ENCODE measurements at regions of chr19 and their contacts with region 1.

Region 1: GRCh38 chr19:4909897-4910593 is 744 bp downstream of the UHRF1 start:
- DNase-seq: peak; percentile 99
- H3K4me3 ChIP-seq: peak overlapping the region; percentile 62 to 82
- H3K27ac ChIP-seq: peak overlapping the region; percentile 81 to 84
- H3K4me1 ChIP-seq: peaks cover 27 to 31% of the 10 kb centered on the region in 2 experiments; a peak in 3 of 4 replicates
- H3K27me3 ChIP-seq: no peaks in the 10 kb centered on the region
- CTCF ChIP-seq: no peak
- EP300 ChIP-seq: no peak
- RAD21 ChIP-seq: no peak

Region 2: DNA sequence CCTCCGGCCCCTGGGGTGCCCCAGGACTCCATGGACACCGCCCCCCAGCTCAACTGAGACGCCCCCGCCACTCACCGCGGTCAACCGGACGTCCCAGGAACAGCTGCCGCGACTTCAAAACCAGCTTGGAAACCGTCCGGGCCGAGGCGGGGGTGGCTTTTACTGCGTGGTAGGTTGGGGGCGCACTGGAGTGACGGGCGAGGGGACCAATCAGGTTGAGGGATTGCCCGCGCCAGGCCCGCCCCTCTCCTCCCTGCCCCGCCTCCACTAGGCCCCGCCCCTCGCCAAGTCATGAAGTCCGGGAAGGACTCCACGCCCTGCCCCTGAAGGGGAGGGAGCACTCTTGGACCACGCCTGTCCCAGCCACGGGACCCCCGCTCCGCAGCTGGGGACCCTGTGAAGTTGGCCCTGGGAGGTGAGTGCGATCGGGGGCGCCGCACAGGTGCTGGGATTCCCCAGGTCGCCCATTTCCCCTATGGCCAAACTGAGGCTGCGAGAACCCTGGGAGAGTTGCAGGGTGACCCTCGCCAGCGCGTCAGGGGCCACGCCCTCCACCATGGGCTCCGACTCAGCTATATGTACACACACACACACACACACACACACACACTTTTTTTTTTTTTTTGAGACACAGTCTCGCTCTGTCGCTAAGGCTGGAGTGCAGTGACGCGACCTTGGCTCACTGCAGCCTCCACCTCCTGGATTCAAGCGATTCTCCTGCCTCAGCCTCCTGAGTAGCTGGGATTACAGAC is 42.3 kb before region 1 on chr19 and contains the start of gene PLIN3:
- CTCF ChIA-PET with region 1: interaction called, 121 read pairs
- POLR2A ChIA-PET with region 1: interaction called, 3 read pairs
- DNase-seq: peak; percentile 100
- H3K4me3 ChIP-seq: peak within 1 kb of the TSS; percentile 60 to 97
- H3K27ac ChIP-seq: peak within 1 kb of the TSS; percentile 55 to 84; a peak in 3 of 4 replicates
- H3K4me1 ChIP-seq: peaks cover 6 to 7% of the 10 kb centered on the region in 2 experiments; a peak in 1 of 4 replicates
- H3K27me3 ChIP-seq: no peaks in the 10 kb centered on the region
- CTCF ChIP-seq: no peak
- EP300 ChIP-seq: no peak
- RAD21 ChIP-seq: no peak
- polyA plus RNA-seq, gene PLIN3: 129 and 136 TPM in 2 replicates

Region 3: DNA sequence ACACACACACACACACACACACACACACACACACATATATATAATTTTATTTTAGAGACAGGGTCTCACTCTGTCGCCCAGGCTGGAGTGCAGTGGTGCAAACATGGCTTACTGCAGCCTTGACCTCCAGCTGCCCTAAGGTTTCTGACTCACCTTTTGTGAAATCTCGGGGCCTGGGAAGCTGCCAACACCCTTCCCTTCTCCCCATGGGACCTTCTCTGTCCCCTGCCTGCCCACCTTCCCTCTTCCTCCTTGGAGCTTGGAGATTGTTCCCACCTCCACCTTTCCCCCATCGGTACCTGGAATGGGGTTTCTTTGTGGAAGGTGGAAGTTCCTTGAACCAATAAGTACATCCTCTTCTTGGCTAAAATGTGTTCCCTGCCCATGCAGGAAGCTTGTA is 13.7 kb before region 1 on chr19:
- CTCF ChIA-PET with region 1: interaction called, 10 read pairs
- POLR2A ChIA-PET with region 1: no interaction called
- DNase-seq: no peak
- H3K4me3 ChIP-seq: no peak overlapping the region
- H3K27ac ChIP-seq: no peak overlapping the region
- H3K4me1 ChIP-seq: no peaks in the 10 kb centered on the region
- H3K27me3 ChIP-seq: no peaks in the 10 kb centered on the region
- CTCF ChIP-seq: no peak
- EP300 ChIP-seq: no peak
- RAD21 ChIP-seq: no peak